Esophagus squamous epithelium (tissue), 5 donors: ENCODE measurements at regions of chr7 and their contacts with region 1.

Region 1: DNA sequence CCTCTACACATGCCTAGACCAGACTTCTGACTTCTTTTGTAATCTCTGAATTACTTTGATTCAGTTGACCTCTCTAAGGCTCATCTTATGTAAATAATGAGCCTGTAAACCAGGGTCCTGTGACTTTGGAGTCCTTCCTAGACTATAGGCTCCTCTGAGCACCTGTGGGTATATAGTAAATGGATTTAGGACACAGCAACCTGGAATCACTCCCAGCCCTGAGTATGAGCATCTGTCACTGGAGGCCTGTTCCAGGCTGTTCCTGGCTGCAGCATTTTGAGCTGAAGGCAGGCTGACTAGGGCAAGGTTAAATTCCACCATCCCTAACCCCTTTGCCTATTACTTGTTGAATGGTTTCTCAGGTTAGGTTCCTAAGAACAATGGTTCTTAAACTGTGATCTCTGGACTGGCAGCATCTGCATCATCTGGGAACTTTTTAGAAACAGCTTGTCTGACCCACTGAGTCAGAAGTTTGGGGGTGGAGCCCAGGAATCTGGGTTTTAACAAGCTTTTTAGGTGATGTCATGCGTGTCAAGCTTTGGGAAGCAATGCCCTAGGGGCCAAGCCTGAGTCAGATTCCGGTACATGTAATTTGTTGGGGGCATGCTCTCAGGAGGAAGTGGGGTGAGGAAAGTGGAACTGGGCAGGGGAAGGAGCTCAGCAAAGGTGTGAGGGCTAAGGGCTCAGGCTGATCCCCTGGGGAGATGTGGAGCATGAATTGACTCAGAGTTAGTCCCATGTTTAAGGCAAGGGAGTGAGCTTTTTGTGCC is 28.2 kb downstream of the MINDY4 start:
- DNase-seq: no peak
- H3K4me3 ChIP-seq: no peak overlapping the region
- H3K27ac ChIP-seq: peak overlapping the region in 2 of 4 donors; percentile 52 to 70
- H3K4me1 ChIP-seq: peaks cover 12 to 76% (median 43%) of the 10 kb centered on the region in 3 donors
- H3K27me3 ChIP-seq: no peaks in the 10 kb centered on the region
- CTCF ChIP-seq: no peak
- POLR2A ChIP-seq: no peak

Region 2: DNA sequence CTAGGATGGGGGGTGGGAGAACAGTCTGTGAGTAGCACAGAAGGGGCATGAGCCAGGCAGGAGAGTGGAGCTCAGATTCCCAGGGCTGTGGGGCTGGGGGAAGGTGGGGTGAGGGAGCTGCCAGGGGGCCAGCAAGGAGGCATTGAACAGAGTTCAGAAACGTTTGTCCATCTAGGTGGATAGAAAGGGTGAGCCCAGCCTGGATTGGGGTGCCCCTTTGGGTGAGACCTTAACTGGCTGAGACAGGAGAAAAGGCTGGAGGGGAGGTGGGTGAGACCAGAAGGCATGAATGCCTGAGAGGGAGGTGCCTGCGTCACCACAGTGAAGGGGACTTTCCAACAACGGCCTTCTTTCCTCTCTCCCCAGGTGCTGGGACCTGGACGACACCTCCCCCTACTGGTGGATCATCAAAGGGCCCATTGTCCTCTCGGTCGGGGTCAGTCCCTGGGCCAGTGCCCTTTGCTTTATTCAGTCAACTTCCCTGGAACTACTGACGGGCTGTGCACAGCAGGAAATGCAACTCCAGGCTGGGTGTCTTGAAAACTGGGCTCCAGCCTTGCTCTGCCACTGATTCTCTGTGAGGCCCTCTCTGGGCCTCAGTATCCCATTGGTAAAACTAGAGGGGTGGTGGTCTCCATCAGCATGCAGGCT is 175.3 kb after region 1 on chr7:
- intact Hi-C with region 1: loop called (anchors 5 kb)
- DNase-seq: no peak
- H3K4me3 ChIP-seq: no peak overlapping the region
- H3K27ac ChIP-seq: no peak overlapping the region
- H3K4me1 ChIP-seq: peaks cover 0 to 7% (median 0%) of the 10 kb centered on the region in 3 donors
- H3K27me3 ChIP-seq: peaks cover 0 to 29% (median 0%) of the 10 kb centered on the region in 4 donors
- CTCF ChIP-seq: peak; percentile 14 to 70 (median 52)
- POLR2A ChIP-seq: no peak